Activated CD4-positive, alpha-beta T cell treated with anti-CD3 and anti-CD28 coated beads for 36 hours (primary cell): ENCODE measurements at regions of chr17 and their contacts with region 1.

Region 1: GRCh38 chr17:50331085-50331791 is 14.7 kb upstream of the XYLT2 start:
- DNase-seq: no peak
- ATAC-seq: peak; percentile 62
- H3K4me3 Mint-ChIP-seq: no peak overlapping the region
- H3K27ac Mint-ChIP-seq: peak overlapping the region; percentile 42
- H3K4me1 Mint-ChIP-seq: peaks cover 15% of the 10 kb centered on the region
- H3K27me3 Mint-ChIP-seq: peaks cover 5% of the 10 kb centered on the region

Region 2: GRCh38 chr17:49851387-49852291 is 479.6 kb before region 1 on chr17:
- CTCF ChIA-PET with region 1: no interaction called
- POLR2A ChIA-PET with region 1: no interaction called
- intact Hi-C with region 1: no loop called
- DNase-seq: peak; percentile 83
- ATAC-seq: peak; percentile 74
- H3K4me3 Mint-ChIP-seq: peak overlapping the region; percentile 76
- H3K27ac Mint-ChIP-seq: peak overlapping the region; percentile 84
- H3K4me1 Mint-ChIP-seq: peaks cover 13% of the 10 kb centered on the region
- H3K27me3 Mint-ChIP-seq: peaks cover 1% of the 10 kb centered on the region

Region 3: GRCh38 chr17:50311112-50311460 is 20.2 kb before region 1 on chr17:
- CTCF ChIA-PET with region 1: interaction called, 5 read pairs
- POLR2A ChIA-PET with region 1: interaction called, 3 read pairs
- intact Hi-C with region 1: loop called (anchors 2 kb)
- DNase-seq: no peak
- ATAC-seq: peak; percentile 81
- H3K4me3 Mint-ChIP-seq: no peak overlapping the region
- H3K27ac Mint-ChIP-seq: peak overlapping the region; percentile 83
- H3K4me1 Mint-ChIP-seq: peaks cover 35% of the 10 kb centered on the region
- H3K27me3 Mint-ChIP-seq: peaks cover 9% of the 10 kb centered on the region

Region 4: GRCh38 chr17:50380369-50381259 is 49.4 kb after region 1 on chr17:
- CTCF ChIA-PET with region 1: no interaction called
- POLR2A ChIA-PET with region 1: no interaction called
- intact Hi-C with region 1: no loop called
- DNase-seq: no peak
- ATAC-seq: no peak
- H3K4me3 Mint-ChIP-seq: no peak overlapping the region
- H3K27ac Mint-ChIP-seq: no peak overlapping the region
- H3K4me1 Mint-ChIP-seq: no peaks in the 10 kb centered on the region
- H3K27me3 Mint-ChIP-seq: no peaks in the 10 kb centered on the region

Region 5: GRCh38 chr17:50626037-50626574 is 294.9 kb after region 1 on chr17:
- CTCF ChIA-PET with region 1: no interaction called
- POLR2A ChIA-PET with region 1: no interaction called
- intact Hi-C with region 1: no loop called
- DNase-seq: peak; percentile 83
- ATAC-seq: peak; percentile 88
- H3K4me3 Mint-ChIP-seq: no peak overlapping the region
- H3K27ac Mint-ChIP-seq: no peak overlapping the region
- H3K4me1 Mint-ChIP-seq: no peaks in the 10 kb centered on the region
- H3K27me3 Mint-ChIP-seq: peaks cover 21% of the 10 kb centered on the region